Activated T-helper 2 cell treated with anti-CD3 and anti-CD28 coated beads, Interferon-gamma antibody, Interleukin-2, Interleukin-4, amounts not matched to agents 10 μg/mL and 5 μg/mL and 100 μg/mL, durations not matched to agents 14 hours and 24 hours and 36 hours (primary cell): ENCODE measurements at regions of chr4 and their contacts with region 1.

Region 1: GRCh38 chr4:88027611-88028608 is 20.5 kb downstream of the PKD2 start:
- DNase-seq: no peak
- H3K4me3 Mint-ChIP-seq: no peak overlapping the region
- H3K27ac Mint-ChIP-seq: peak overlapping the region; percentile 76
- H3K4me1 Mint-ChIP-seq: peaks cover 29% of the 10 kb centered on the region
- H3K27me3 Mint-ChIP-seq: no peaks in the 10 kb centered on the region

Region 2: DNA sequence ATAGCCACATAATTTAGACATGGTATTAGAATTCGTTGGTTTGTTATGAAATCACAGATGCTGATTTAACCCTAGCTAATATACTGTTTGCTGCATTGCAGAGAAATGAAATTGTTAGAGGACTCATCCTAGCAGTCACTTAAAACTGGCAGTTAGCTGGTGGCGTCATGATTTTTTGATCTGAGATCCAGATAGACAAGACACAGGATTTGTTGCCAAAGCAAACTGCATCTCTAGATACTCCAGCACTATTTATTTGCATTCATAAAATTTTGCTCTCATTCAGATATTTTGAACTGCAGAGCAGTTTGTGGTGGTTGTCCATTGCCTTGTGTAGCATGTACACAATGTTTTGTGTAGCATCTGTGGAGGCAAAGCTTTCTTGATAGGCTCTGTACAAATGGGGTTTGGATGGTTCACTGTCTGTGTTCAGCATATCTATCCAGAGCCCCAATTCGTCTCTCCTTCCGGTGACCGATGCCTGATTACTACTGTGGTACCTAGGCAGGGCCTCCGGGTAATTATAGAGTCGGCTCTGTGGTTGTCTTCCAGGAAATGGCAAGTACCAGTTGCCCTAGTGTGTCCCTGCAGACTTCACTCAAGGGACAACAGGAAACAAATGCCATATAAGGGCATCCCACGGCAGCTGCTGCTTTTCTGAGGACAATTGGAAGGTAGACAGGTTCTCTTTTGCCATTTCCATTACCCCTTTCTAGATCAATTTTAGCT is 468.6 kb before region 1 on chr4:
- intact Hi-C with region 1: loop called (anchors 5 kb)
- DNase-seq: peak; percentile 66
- H3K4me3 Mint-ChIP-seq: no peak overlapping the region
- H3K27ac Mint-ChIP-seq: peak overlapping the region; percentile 65
- H3K4me1 Mint-ChIP-seq: peaks cover 28% of the 10 kb centered on the region
- H3K27me3 Mint-ChIP-seq: no peaks in the 10 kb centered on the region

Region 3: DNA sequence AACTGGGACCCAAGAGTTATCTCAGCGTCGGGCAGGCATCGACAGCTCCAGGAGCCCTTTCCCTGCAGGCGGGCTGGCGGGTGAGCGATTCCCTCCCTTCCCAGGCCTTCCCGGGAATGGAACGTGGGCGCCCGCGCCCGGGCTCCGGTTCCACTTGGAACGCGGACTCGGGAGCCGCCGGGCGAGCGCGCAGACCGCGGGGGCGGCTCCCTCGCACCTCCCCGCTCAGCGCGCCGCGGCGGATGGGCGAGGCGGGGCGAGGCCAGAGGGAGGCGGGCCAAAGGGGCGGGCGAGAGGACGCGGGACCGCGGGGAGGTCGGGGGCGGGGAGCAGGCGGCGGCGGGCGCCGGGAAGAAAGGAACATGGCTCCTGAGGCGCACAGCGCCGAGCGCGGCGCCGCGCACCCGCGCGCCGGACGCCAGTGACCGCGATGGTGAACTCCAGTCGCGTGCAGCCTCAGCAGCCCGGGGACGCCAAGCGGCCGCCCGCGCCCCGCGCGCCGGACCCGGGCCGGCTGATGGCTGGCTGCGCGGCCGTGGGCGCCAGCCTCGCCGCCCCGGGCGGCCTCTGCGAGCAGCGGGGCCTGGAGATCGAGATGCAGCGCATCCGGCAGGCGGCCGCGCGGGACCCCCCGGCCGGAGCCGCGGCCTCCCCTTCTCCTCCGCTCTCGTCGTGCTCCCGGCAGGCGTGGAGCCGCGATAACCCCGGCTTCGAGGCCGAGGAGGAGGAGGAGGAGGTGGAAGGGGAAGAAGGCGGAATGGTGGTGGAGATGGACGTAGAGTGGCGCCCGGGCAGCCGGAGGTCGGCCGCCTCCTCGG is 20.4 kb before region 1 on chr4 and contains the start of gene PKD2:
- intact Hi-C with region 1: loop called (anchors 2 kb)
- DNase-seq: peak; percentile 80
- H3K4me3 Mint-ChIP-seq: peak within 1 kb of the TSS; percentile 91
- H3K27ac Mint-ChIP-seq: peak within 1 kb of the TSS; percentile 85
- H3K4me1 Mint-ChIP-seq: peaks cover 30% of the 10 kb centered on the region
- H3K27me3 Mint-ChIP-seq: peaks cover 15% of the 10 kb centered on the region
- total RNA-seq, gene PKD2: 13.6 and 16.6 TPM in 2 replicates

Region 4: GRCh38 chr4:88045021-88045420 is 17.1 kb after region 1 on chr4:
- intact Hi-C with region 1: no loop called
- DNase-seq: no peak
- H3K4me3 Mint-ChIP-seq: no peak overlapping the region
- H3K27ac Mint-ChIP-seq: no peak overlapping the region
- H3K4me1 Mint-ChIP-seq: no peaks in the 10 kb centered on the region
- H3K27me3 Mint-ChIP-seq: no peaks in the 10 kb centered on the region

Region 5: GRCh38 chr4:88320780-88321373 is 293.0 kb after region 1 on chr4:
- intact Hi-C with region 1: no loop called
- DNase-seq: peak; percentile 35
- H3K4me3 Mint-ChIP-seq: peak overlapping the region; percentile 75
- H3K27ac Mint-ChIP-seq: peak overlapping the region; percentile 85
- H3K4me1 Mint-ChIP-seq: peaks cover 26% of the 10 kb centered on the region
- H3K27me3 Mint-ChIP-seq: no peaks in the 10 kb centered on the region